Naive thymus-derived CD8-positive, alpha-beta T cell (primary cell): ENCODE measurements at regions of chr16 and their contacts with region 1.

Region 1: GRCh38 chr16:3214904-3215600 is 19.9 kb downstream of the ZNF200 start:
- DNase-seq: peak in 8 of 10 donors; percentile 34 to 89 (median 76)
- ATAC-seq: peak; percentile 88 to 92
- H3K4me3 Mint-ChIP-seq: peak overlapping the region; percentile 55 to 88 (median 80)
- H3K27ac Mint-ChIP-seq: peak overlapping the region; percentile 94 to 100 (median 99)
- H3K4me1 Mint-ChIP-seq: peaks cover 23 to 47% (median 42%) of the 10 kb centered on the region in 4 donors
- H3K27me3 Mint-ChIP-seq: no peaks in the 10 kb centered on the region

Region 2: GRCh38 chr16:3188925-3189825 is 25.9 kb before region 1 on chr16:
- POLR2A ChIA-PET with region 1: interaction called, 13 read pairs
- DNase-seq: peak in 4 of 10 donors; percentile 27 to 43 (median 35)
- ATAC-seq: peak; percentile 41 to 46
- H3K4me3 Mint-ChIP-seq: peak overlapping the region; percentile 45 to 86 (median 76)
- H3K27ac Mint-ChIP-seq: peak overlapping the region; percentile 6 to 81 (median 46)
- H3K4me1 Mint-ChIP-seq: peaks cover 20 to 46% (median 36%) of the 10 kb centered on the region in 4 donors
- H3K27me3 Mint-ChIP-seq: peaks cover 31 to 81% (median 59%) of the 10 kb centered on the region in 5 donors

Region 3: DNA sequence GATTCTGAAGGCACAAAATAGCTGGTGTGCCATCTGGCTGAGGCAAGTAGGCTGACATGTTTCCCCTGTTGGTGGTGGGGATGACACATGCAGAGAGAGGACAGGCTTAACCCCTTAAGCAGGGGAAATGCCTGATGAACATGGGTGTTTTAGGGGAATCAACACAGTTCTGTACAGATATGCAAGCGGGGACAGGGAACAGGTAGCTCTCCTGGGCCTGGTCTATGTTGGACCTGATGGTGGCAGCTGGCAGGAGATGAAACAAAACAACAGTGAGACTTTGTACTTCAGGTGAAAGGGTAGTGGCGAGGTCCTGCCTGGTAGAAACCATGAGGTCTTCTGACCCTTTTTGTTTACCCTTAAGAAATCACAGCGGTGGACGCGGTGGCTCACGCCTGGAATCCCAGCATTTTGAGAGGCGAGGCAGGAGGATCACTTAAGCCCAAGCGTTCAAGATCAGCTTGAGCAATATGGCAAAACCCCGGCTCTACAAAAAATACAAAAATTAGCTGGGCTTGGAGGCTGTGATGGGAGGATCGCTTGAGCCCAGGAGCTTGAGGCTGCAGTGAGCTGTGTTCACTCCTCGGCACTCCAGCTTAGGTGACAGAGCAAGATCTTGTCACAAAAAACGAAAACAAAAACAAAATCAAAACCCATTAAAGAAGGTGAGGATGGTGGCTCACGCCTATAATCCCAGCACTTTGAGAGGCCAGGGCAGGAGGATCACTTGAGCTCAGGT is 16.5 kb before region 1 on chr16:
- POLR2A ChIA-PET with region 1: interaction called, 11 read pairs
- DNase-seq: no peak
- ATAC-seq: no peak
- H3K4me3 Mint-ChIP-seq: no peak overlapping the region
- H3K27ac Mint-ChIP-seq: peak overlapping the region in 2 of 10 donors; percentile 8 to 71
- H3K4me1 Mint-ChIP-seq: peaks cover 0 to 5% (median 0%) of the 10 kb centered on the region in 4 donors
- H3K27me3 Mint-ChIP-seq: peaks cover 14 to 34% (median 21%) of the 10 kb centered on the region in 5 donors

Region 4: DNA sequence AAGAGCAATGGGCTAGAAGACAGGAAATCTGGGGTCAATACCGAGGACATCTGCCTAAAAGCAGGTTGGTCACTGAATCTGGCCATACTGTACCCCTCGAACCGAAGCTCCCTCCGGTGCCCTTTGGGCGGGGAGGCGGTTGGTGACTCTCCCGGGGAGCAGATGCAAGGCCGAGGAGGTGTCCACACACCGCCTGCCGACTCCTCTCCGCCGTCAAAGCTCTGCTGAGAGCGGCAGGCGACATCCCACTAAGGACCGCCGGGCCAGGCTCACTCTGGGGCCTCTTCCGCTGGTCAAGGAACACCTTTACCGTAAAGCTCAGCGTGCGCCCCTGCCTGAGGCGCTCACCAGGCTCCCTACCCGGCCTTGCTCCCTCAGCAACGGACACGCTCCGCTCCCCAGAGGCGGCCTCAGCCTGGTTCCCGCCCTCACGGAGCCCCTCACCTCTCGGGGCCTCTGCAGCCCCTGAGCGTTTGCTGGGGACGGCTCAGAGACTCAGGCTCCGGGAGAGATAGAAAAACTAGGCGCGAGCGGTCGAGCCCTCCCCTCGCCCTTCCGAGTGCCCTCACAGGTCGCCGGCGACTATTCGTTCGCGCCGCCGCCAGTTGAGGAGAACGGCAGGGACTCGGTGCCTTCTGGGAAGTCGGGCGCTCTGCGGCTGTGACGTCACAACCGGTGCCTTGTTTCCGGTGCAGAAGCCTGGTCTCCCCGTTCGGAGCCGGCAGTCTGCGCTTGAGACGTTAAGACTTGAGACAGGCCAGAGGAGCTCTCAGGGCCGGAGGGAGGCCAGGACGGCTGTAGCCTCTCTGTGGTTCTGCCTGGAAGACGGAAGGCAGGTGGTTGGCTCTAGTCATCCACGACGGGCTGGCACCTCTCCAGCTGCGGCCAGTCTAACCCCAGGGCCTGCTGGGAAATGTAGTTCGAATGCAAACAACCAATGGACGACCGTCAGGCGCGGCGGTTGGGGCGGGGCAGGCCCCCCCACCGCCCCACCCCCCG is 19.8 kb after region 1 on chr16 and contains the start of gene ZNF200:
- POLR2A ChIA-PET with region 1: interaction called, 25 read pairs
- DNase-seq: peak; percentile 85 to 99 (median 92)
- ATAC-seq: peak; percentile 92 to 94
- H3K4me3 Mint-ChIP-seq: peak within 1 kb of the TSS; percentile 92 to 99 (median 95)
- H3K27ac Mint-ChIP-seq: peak within 1 kb of the TSS; percentile 90 to 99 (median 98)
- H3K4me1 Mint-ChIP-seq: peaks cover 18 to 39% (median 34%) of the 10 kb centered on the region in 4 donors
- H3K27me3 Mint-ChIP-seq: no peaks in the 10 kb centered on the region
- polyA plus RNA-seq, gene ZNF200: 6.8 to 14.3 (median 13.9) TPM

Region 5: GRCh38 chr16:3383045-3383448 is 168.0 kb after region 1 on chr16:
- POLR2A ChIA-PET with region 1: no interaction called
- DNase-seq: no peak
- ATAC-seq: no peak
- H3K4me3 Mint-ChIP-seq: no peak overlapping the region
- H3K27ac Mint-ChIP-seq: no peak overlapping the region
- H3K4me1 Mint-ChIP-seq: peaks cover 0 to 2% (median under 1%) of the 10 kb centered on the region in 4 donors
- H3K27me3 Mint-ChIP-seq: no peaks in the 10 kb centered on the region